Cardiac septum (tissue), 1 donor: ENCODE measurements at regions of chr2 and their contacts with region 1.

Region 1: DNA sequence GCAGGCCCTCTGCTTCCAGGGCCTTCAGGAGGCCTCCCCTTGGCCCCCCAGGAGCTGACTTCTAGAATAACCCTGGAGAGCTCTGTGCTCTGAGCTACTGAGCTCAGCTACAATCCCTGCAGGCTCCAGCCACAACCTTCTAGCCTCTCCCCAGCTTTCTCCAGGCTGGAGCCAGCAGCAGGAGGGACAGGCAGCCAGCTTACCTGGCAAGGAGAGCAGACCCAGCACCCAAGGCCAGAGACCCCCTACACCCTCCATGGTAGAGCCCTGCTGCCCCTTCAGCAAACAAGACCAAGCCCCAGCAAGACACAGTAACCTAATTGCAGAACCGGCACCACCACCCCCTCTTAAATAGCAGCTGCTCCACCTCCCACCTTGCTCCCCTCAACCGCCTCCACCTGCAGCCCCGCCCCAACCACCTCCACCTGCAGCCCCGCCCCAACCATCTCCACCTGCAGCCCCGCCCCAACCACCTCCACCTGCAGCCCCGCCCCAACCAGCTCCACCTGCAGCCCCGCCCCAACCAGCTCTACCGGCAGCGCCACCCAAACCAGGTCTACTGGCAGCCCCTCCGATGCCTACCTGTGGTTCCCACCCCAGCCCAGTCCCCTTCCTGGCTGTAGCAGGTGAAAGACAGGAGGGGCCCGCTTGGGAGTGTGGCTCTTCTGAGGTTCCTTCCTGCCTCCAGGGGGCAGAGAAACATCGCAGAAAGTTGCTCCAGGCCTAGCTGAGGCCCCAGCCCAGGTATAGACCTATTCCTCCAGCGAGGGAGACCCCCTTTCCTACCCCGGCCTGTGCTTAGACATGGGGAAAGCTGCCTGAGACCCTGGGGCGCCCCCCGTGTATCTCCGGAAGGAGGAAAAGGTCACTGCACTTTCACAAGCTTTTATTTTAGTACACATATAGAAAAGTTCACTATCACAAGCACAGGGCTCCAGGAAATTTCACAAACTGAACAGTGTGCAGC is at the start of gene ASTL:
- DNase-seq: no peak
- total RNA-seq, gene ASTL: not detected

Region 2: DNA sequence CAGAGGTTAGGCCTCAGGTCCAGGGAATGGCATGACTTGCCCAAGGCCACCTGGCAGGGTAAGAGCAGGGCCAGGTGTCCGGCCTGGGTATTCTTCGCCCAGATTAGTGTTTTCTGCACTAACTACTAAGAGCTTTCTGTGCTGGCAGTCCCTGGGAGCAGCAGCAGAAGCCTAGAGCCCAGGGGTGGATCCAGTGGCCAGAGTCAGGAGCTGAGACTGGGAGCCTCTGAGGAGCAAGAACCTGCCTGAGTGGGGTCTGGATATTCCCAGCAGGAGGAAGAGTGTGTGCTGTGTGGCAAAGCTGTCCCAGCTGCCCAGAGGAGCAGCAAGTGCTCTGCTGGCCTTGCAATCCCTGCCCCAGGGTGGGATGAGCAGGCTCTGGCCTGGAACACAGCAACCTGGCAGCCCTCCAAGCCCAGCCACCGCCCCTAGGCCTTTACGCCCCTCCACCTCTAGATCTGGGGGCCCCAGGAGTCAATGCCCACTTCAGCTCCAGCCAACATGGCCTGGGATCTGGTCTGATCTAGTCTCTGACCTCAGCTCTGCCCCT is 73.0 kb before region 1 on chr2:
- intact Hi-C with region 1: no loop called
- DNase-seq: peak; percentile 75

Region 3: GRCh38 chr2:96174251-96175144 is 36.0 kb after region 1 on chr2:
- intact Hi-C with region 1: loop called (anchors 5 kb)
- DNase-seq: peak; percentile 85